Ovary (tissue), 10 donors: ENCODE measurements at regions of chr2 and their contacts with region 1.

Region 1: GRCh38 chr2:55050133-55050994 is at the start of gene RTN4:
- DNase-seq: peak; percentile 97 to 99 (median 98)
- H3K4me3 ChIP-seq: peak within 1 kb of the TSS; percentile 84
- H3K27ac ChIP-seq: peak within 1 kb of the TSS; percentile 92 to 99
- H3K4me1 ChIP-seq: peaks cover 6% of the 10 kb centered on the region
- H3K27me3 ChIP-seq: no peaks in the 10 kb centered on the region
- CTCF ChIP-seq: peak in 2 of 3 donors; percentile 8 to 27
- EP300 ChIP-seq: no peak
- POLR2A ChIP-seq: peak; percentile 98
- total RNA-seq, gene RTN4: 118 to 275 (median 200) TPM

Region 2: GRCh38 chr2:54966165-54966832 is 84.1 kb before region 1 on chr2:
- intact Hi-C with region 1: no loop called
- DNase-seq: no peak
- H3K4me3 ChIP-seq: no peak overlapping the region
- H3K27ac ChIP-seq: no peak overlapping the region
- H3K4me1 ChIP-seq: no peaks in the 10 kb centered on the region
- H3K27me3 ChIP-seq: no peaks in the 10 kb centered on the region
- CTCF ChIP-seq: no peak
- EP300 ChIP-seq: no peak
- POLR2A ChIP-seq: no peak

Region 3: DNA sequence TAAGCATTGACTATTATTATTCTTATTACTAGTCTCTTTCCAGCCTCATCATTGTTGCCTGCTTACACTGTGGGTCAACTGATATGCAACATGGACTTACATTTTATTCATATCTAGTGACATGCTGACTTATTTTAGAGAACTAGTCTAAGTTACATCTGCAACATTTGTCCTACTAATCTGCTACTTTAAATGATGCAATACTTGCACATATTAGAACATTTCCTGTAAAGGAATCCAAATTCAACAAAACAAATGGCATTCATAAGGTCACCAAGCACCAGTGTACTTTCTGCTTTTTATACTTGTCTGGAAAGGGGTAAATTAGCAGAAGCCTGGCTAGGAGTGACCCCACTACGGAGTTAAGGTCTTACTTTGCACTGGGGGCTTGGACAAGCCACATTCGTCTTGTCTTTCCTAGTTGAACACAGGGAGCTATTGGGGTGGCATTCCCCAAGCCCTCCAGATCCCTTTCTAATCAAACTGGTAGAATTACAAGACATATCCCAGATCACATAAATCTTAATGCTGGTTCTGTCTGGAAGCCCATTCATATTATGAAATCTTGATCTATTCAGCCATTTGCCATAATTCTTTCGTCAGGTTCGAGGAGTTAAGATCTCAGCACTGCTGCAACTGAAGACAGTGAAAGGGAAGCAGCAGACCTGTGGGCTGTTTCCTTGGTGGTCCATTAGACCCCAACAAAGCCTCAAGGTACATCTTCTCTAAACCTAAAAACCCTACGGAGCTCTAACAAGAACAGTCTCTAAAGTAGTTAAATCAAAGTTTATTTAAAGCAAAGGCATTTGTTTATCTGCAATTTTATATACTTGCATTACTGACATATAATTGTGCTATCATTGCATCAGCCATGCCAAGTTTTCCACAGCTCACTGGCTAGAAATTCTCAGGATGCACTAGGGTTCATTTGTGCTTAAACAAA is 49.8 kb after region 1 on chr2:
- intact Hi-C with region 1: loop called in 1 of 4 experiments (anchors 5 kb)
- DNase-seq: no peak
- H3K4me3 ChIP-seq: no peak overlapping the region
- H3K27ac ChIP-seq: peak overlapping the region in 1 of 2 donors; percentile 2
- H3K4me1 ChIP-seq: peaks cover 16% of the 10 kb centered on the region
- H3K27me3 ChIP-seq: no peaks in the 10 kb centered on the region
- CTCF ChIP-seq: no peak
- EP300 ChIP-seq: no peak
- POLR2A ChIP-seq: no peak

Region 4: DNA sequence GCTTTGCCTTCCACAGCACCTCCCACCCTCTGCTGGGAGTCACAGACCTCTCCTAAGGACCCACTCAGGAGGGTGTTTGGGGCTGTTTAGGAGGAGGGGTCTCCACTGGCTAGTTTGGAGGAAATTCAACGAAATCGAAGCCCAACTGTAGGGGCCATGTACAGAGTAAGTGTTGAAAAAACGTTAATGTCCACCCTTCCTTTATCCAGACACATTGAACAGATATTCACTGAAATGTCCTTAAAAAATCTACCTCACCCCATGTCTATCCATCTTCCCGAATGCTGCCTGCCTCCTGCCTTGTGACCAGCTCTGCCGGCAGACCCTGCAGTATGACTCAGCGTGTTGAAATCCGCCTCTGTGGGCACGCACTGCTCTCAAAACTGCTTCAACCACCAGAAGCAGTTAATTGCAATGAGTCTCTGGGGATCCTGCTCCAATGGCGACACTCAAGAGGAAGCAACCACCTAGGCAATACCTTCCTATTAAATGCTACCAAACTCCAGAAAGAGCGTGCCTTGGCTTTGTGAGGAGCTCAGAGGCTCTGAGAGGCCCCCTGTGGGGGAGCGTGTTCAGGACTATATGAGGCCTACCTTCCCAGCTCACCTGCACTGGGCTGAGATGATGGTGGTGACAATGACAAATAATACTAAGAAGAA is 61.3 kb after region 1 on chr2:
- intact Hi-C with region 1: loop called in 1 of 4 experiments (anchors 10 kb)
- DNase-seq: peak; percentile 54 to 67 (median 62)
- H3K4me3 ChIP-seq: no peak overlapping the region
- H3K27ac ChIP-seq: peak overlapping the region in 1 of 2 donors; percentile 82
- H3K4me1 ChIP-seq: peaks cover 12% of the 10 kb centered on the region
- H3K27me3 ChIP-seq: no peaks in the 10 kb centered on the region
- CTCF ChIP-seq: no peak
- EP300 ChIP-seq: no peak
- POLR2A ChIP-seq: no peak